Activated CD8-positive, alpha-beta T cell treated with anti-CD3 and anti-CD28 coated beads for 36 hours (primary cell): ENCODE measurements at regions of chr12 and their contacts with region 1.

Region 1: GRCh38 chr12:38324896-38325295 is 8.3 kb downstream of the ALG10B start:
- DNase-seq: no peak
- ATAC-seq: no peak
- H3K4me3 Mint-ChIP-seq: no peak overlapping the region
- H3K27ac Mint-ChIP-seq: no peak overlapping the region
- H3K4me1 Mint-ChIP-seq: peaks cover 4% of the 10 kb centered on the region
- H3K27me3 Mint-ChIP-seq: no peaks in the 10 kb centered on the region
- CTCF ChIP-seq: no peak

Region 2: DNA sequence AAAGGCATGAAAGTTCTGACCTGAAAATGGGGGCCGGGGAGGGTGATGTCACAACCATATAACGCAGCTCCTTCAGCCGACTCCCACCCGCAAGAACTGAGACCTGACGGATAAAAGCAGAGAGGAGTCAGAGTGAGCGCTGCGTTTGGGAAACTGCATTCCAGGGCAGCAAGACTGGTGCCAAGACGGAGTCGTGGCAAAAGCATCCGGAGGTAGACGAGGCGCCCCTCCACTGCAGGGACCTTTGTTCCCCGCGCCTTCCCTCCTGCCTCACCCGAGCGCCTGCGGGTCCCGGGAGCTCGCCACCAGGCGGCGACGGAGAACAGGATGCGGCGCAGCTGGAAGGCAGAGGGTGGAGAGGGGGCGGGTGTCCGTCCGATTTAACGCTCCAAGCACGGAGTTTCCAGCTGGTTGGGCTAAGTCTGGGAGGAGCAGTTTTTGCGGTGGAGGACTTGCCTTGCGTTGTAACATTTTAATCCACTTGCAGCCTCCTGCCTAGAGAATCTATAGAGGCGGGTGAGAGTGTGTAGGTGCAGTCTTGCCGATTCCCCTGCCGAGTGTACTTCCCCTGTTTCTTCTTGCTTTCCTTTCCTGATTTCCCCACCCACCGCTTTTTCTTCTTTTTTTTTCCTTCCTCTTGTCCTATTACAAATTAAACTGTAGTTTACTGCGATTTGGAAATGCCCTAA is 581.7 kb after region 1 on chr12:
- CTCF ChIA-PET with region 1: no interaction called
- POLR2A ChIA-PET with region 1: no interaction called
- intact Hi-C with region 1: loop called (anchors 10 kb)
- DNase-seq: peak; percentile 69
- ATAC-seq: peak; percentile 78
- H3K4me3 Mint-ChIP-seq: peak overlapping the region; percentile 75
- H3K27ac Mint-ChIP-seq: peak overlapping the region; percentile 62
- H3K4me1 Mint-ChIP-seq: peaks cover 12% of the 10 kb centered on the region
- H3K27me3 Mint-ChIP-seq: peaks cover 32% of the 10 kb centered on the region
- CTCF ChIP-seq: peak; percentile 62